Sigmoid colon (tissue), 7 donors: ENCODE measurements at regions of chr18 and their contacts with region 1.

Region 1: DNA sequence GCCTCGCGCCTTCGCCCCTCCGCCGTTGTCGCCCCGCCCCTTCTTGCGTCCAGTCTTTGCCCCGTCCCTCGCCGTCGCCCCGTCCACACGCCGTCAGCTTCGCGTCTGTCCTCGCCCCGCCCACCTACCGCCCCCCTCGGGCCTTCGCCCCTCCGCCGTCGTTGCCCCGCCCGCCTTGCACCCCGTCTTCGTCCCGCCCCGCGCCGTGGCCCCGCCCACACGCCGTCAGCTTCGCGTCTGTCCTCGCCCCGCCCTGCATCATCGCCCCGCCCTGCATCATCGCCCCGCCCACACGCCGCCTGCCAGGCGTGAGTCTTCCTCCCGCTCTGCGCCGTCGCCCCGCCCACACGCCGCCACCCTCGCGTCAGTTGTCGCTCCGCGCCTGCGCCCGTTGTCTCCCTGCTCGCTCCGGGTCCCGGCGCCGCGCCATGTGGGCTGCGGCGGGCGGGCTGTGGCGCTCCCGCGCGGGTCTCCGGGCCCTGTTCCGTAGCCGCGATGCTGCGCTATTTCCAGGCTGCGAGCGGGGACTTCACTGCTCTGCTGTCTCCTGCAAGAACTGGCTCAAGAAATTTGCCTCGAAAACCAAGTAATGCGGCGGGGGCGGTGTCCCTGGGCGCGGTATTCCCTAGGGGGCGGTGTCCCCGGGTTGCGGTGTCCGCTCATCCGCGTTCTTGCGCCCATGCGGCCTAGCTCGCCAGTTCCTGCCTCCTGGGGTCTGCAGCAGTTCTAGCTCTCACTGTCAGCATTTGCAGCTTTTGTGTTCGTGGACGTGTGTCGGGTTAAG is at the start of gene RBFA:
- DNase-seq: peak; percentile 100
- H3K4me3 ChIP-seq: peak within 1 kb of the TSS; percentile 44 to 93 (median 78)
- H3K27ac ChIP-seq: peak within 1 kb of the TSS; percentile 83 to 91 (median 84)
- H3K4me1 ChIP-seq: peaks cover 0 to 21% (median 13%) of the 10 kb centered on the region in 4 donors
- H3K27me3 ChIP-seq: no peaks in the 10 kb centered on the region
- CTCF ChIP-seq: peak in 3 of 4 experiments; percentile 27 to 46 (median 42)
- EP300 ChIP-seq: no peak
- POLR2A ChIP-seq: peak in 1 of 2 donors; percentile 36
- total RNA-seq, gene RBFA: 20.2 to 39.5 (median 28.4) TPM

Region 2: GRCh38 chr18:80009661-80010550 is 24.4 kb before region 1 on chr18:
- intact Hi-C with region 1: loop called (anchors 1 kb)
- DNase-seq: peak; percentile 97
- H3K4me3 ChIP-seq: peak overlapping the region in 1 of 4 donors; percentile 7
- H3K27ac ChIP-seq: peak overlapping the region; percentile 79 to 89 (median 82)
- H3K4me1 ChIP-seq: peaks cover 0 to 20% (median 16%) of the 10 kb centered on the region in 4 donors
- H3K27me3 ChIP-seq: no peaks in the 10 kb centered on the region
- CTCF ChIP-seq: no peak
- EP300 ChIP-seq: peak; percentile 32 to 89 (median 51)
- POLR2A ChIP-seq: no peak

Region 3: GRCh38 chr18:80108728-80109675 is 74.7 kb after region 1 on chr18 and contains the start of gene ADNP2:
- intact Hi-C with region 1: loop called (anchors 2 kb)
- DNase-seq: peak; percentile 92
- H3K4me3 ChIP-seq: peak within 1 kb of the TSS; percentile 39 to 90 (median 75)
- H3K27ac ChIP-seq: peak within 1 kb of the TSS; percentile 83 to 94 (median 92)
- H3K4me1 ChIP-seq: peaks cover 0 to 24% (median 13%) of the 10 kb centered on the region in 4 donors
- H3K27me3 ChIP-seq: no peaks in the 10 kb centered on the region
- CTCF ChIP-seq: no peak
- EP300 ChIP-seq: no peak
- POLR2A ChIP-seq: no peak
- total RNA-seq, gene ADNP2: 13.0 to 18.0 (median 13.3) TPM

Region 4: DNA sequence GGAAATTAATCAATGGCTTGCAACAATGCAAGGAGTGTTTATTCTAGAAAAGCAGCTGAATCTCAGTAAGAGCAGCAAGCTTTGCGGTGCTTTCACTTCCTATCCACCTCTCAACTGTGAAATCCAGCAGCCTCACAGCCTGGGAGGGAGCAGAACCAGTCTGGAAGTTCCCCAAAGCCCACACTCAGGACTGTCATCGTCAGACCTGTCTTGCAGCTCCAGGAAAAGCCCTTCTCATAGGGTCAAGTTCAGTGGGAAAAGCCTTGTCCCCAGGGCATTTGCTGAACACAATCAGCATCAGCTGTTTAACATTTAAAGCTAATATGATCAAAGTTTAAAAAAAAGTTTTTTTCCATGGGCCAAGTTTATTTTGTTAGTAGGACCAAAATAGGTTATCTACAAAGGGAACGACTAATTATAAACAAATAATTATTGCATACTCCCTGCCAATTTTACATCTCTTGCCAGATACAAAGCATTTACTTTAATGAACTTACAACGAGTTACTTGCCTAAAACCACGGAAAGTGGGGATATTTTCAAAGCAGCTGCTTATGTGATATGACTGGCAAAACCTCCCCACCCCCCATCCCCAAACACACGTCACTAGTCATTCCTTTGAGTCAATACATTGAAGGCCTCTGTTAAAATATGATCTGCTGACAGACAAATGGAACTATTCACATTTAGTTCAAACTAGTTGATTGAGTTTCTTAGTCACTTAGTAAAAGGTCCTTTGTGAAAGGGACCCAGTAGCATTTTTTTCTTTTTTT is 176.2 kb after region 1 on chr18:
- intact Hi-C with region 1: no loop called
- DNase-seq: peak; percentile 11
- H3K4me3 ChIP-seq: no peak overlapping the region
- H3K27ac ChIP-seq: no peak overlapping the region
- H3K4me1 ChIP-seq: no peaks in the 10 kb centered on the region
- H3K27me3 ChIP-seq: no peaks in the 10 kb centered on the region
- CTCF ChIP-seq: no peak
- EP300 ChIP-seq: no peak
- POLR2A ChIP-seq: no peak